PC-3 (cell line): ENCODE measurements at regions of chr9 and their contacts with region 1.

Region 1: DNA sequence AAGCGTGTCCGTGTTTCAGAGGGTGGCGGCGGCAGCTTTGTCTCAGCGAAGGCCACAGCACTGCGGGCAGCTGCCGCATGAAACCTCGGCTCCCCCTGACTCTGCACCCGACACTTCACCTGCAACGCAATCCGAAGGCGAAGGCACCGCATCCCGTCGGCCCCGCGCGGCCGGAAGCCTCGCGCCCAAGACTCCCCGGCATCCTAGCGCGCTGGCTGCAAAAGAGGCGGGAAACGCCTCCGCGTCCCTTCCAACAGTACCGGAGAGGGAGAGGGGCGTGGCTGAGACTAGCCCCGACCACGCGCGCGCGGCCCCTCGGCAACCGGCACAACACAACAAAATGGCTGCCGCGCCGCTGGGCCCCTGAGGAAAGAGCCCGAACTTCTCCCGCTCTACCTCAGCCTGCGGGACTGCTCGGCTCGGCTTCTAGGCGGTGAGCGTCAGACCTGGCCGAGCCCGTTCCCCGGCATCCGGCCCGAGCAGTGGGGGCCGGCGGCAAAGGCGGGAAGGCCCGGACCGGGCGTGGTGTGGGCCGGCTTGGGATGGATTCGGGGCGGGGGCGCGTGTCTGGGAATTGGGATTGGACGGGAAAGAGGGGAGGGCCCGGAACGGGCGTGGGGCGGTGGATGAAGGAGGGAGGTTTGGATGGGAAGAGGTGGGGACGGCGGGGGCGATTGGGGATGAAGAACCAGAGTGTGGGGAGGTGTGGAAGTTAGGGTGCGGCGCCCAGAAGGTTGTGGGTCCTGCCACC is at the start of gene CNTRL:
- DNase-seq: peak; percentile 81
- ATAC-seq: peak; percentile 84
- H3K4me3 ChIP-seq: peak within 1 kb of the TSS; percentile 79
- H3K27ac ChIP-seq: peak within 1 kb of the TSS; percentile 86
- H3K4me1 ChIP-seq: peaks cover 10% of the 10 kb centered on the region
- H3K27me3 ChIP-seq: no peaks in the 10 kb centered on the region
- CTCF ChIP-seq: no peak
- total RNA-seq, gene CNTRL: 6.0 and 7.9 TPM in 2 replicates

Region 2: GRCh38 chr9:120755827-120756434 is 318.9 kb before region 1 on chr9:
- CTCF ChIA-PET with region 1: no interaction called
- POLR2A ChIA-PET with region 1: no interaction called
- intact Hi-C with region 1: loop called (anchors 2 kb)
- DNase-seq: peak; percentile 73
- ATAC-seq: peak; percentile 50; the same call in 1 of the 2 replicates
- H3K4me3 ChIP-seq: no peak overlapping the region
- H3K27ac ChIP-seq: no peak overlapping the region
- H3K4me1 ChIP-seq: no peaks in the 10 kb centered on the region
- H3K27me3 ChIP-seq: no peaks in the 10 kb centered on the region
- CTCF ChIP-seq: peak; percentile 84

Region 3: DNA sequence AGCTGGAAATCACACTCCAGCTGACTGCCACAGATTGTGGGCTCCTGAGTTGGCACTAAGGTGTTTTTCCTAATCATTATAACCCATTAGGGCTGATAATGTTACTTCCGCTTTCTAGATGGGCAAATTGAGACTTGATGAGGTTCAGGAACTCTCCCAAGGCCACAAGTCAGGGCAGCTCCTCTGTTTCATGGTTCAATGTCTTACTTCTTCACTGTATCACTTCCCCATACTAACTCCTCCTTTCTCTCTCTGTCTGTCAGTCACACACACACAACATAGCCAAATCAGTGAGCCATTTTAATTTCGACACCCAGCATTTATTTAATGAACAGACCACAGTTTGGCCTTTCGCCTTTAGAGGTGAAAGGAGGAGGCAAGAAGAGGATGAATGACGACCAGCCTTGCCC is 130.4 kb before region 1 on chr9:
- CTCF ChIA-PET with region 1: no interaction called
- POLR2A ChIA-PET with region 1: no interaction called
- intact Hi-C with region 1: loop called (anchors 5 kb)
- DNase-seq: no peak
- ATAC-seq: no peak
- H3K4me3 ChIP-seq: no peak overlapping the region
- H3K27ac ChIP-seq: no peak overlapping the region
- H3K4me1 ChIP-seq: peaks cover 58% of the 10 kb centered on the region
- H3K27me3 ChIP-seq: no peaks in the 10 kb centered on the region
- CTCF ChIP-seq: no peak

Region 4: DNA sequence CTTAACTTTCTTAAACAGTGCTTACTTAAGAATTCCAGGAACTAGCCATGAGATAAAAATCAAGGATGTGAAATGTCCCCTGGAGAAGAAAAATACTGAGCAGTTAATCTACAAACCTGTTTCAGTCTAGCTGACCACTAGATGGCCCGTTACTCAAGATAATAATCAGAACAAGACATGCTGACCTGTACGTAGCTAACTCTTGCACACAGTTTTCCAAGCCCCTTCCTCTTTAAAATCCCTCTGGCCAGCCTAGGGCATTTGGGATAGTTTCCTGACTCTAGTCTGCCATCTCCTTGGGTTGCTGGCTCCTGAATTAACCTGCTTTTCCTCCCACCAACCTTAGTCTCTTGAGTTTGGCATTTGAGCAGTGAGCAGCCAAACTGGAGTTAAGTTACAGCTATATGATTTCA is 89.0 kb before region 1 on chr9:
- CTCF ChIA-PET with region 1: interaction called, 9 read pairs
- POLR2A ChIA-PET with region 1: no interaction called
- intact Hi-C with region 1: loop called (anchors 1 kb)
- DNase-seq: peak; percentile 75
- ATAC-seq: peak; percentile 87
- H3K4me3 ChIP-seq: no peak overlapping the region
- H3K27ac ChIP-seq: no peak overlapping the region
- H3K4me1 ChIP-seq: no peaks in the 10 kb centered on the region; the same call in 1 of the 2 replicates
- H3K27me3 ChIP-seq: no peaks in the 10 kb centered on the region
- CTCF ChIP-seq: peak; percentile 75

Region 5: GRCh38 chr9:121021301-121021700 is 53.5 kb before region 1 on chr9:
- CTCF ChIA-PET with region 1: no interaction called
- POLR2A ChIA-PET with region 1: no interaction called
- intact Hi-C with region 1: loop called (anchors 2 kb)
- DNase-seq: no peak
- ATAC-seq: no peak
- H3K4me3 ChIP-seq: no peak overlapping the region
- H3K27ac ChIP-seq: no peak overlapping the region
- H3K4me1 ChIP-seq: peaks cover 18% of the 10 kb centered on the region
- H3K27me3 ChIP-seq: no peaks in the 10 kb centered on the region
- CTCF ChIP-seq: no peak

Region 6: GRCh38 chr9:121085661-121086060 is 10.9 kb after region 1 on chr9:
- CTCF ChIA-PET with region 1: no interaction called
- POLR2A ChIA-PET with region 1: no interaction called
- intact Hi-C with region 1: no loop called
- DNase-seq: no peak
- ATAC-seq: no peak
- H3K4me3 ChIP-seq: no peak overlapping the region
- H3K27ac ChIP-seq: no peak overlapping the region
- H3K4me1 ChIP-seq: no peaks in the 10 kb centered on the region
- H3K27me3 ChIP-seq: no peaks in the 10 kb centered on the region
- CTCF ChIP-seq: no peak